HEK293T (cell line): ENCODE measurements at regions of chr7 and their contacts with region 1.

Region 1: DNA sequence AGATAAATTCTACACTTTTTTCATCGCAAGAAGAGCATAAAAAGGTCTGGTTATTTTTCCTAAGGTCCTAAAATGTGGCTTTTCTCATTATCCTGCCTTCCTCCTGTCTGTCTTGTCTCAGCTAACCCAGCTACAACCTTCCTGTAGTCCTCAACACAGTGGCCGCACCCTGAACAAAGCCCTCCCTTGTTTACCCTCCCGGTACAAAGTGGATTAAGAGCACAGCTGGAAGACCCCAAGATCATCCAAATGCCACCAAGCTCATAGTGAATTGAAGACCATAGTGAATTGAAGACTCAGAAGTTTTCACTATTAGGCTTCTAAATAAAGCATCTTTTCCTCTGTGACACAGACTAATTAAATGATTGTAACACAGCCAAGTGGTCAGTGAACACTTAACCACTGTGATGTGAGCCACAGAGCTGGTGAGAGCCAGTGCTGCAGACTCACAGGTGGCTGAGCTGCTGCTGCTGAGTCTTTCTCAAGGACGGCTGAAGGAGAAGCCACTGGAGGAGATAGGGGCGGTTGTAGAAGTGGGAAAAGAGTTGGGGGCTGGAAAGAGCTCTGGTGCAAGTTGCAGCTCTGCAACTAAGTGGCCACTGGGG is 123.6 kb downstream of the ATXN7L1 start:
- DNase-seq: no peak

Region 2: DNA sequence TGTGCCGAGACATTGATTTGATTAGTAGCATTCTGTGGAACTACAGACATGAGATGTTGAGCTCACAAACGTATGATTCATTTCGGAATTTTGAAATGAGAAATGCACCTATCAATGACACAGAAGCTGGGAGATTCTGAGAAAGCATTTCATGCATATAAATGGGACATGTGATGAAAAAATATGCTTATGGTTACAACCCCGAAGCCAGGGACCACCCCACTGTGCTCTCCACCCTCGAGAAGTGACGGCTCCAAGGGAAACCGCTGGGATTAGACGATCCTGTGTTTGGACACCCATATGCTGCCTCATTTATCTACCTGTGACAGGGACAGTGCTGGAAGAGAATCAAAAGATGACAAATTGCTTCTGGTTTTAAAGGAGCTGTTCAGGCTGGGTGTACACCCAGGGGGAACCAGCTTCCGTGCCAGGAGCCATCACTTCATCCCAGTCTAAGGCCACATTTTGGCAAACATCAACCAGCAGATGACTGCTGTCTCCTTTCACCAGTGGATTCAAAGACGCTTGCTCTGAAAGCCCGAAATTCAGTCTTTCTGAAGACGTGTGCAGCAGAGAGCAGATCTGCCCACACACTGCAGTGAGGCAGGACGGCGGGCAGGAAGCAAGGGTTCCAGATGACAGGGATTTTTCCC is 13.8 kb after region 1 on chr7:
- CTCF ChIA-PET with region 1: interaction called, 11 read pairs
- POLR2A ChIA-PET with region 1: no interaction called
- DNase-seq: no peak

Region 3: DNA sequence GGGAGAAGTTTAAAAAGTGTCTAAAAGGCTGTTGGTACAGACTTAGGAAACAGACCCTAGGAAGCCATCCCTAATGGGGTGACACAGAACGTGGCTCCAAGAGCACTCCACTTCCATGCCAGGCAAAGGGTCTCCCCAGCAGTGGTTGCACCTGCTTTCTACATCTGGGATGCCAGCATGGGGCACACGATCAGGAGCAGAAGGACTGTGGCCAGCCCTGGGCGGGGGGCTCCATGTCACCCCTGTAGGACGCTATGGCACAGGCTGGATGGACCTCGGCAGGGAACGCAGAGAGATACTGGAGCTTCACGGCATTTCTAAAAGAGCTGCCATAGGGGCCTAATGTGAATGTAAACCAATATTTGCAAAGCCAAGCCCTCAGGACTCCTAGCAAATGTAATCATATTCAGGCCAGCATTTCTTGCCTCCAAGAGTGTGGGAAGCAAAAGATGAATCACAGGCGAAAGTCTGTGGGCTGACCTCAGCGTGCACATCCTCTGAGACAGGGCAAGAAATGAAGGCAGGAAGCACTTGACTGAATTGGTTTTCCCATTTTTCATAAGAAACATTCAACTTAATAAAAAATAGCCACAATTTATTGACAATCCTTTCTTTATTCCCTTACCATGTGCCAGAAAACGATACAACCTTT is 29.7 kb after region 1 on chr7:
- CTCF ChIA-PET with region 1: no interaction called
- POLR2A ChIA-PET with region 1: no interaction called
- DNase-seq: no peak